Activated CD8-positive, alpha-beta T cell treated with anti-CD3 and anti-CD28 coated beads for 36 hours (primary cell): ENCODE measurements at regions of chr18 and their contacts with region 1.

Region 1: GRCh38 chr18:11553098-11553940 is 56.1 kb upstream of the SLC35G4 start:
- DNase-seq: peak; percentile 53
- ATAC-seq: peak; percentile 74
- H3K4me3 Mint-ChIP-seq: no peak overlapping the region
- H3K27ac Mint-ChIP-seq: no peak overlapping the region
- H3K4me1 Mint-ChIP-seq: no peaks in the 10 kb centered on the region
- H3K27me3 Mint-ChIP-seq: peaks cover 2% of the 10 kb centered on the region
- CTCF ChIP-seq: peak; percentile 92

Region 2: GRCh38 chr18:11215216-11215615 is 338.1 kb before region 1 on chr18:
- CTCF ChIA-PET with region 1: no interaction called
- POLR2A ChIA-PET with region 1: no interaction called
- intact Hi-C with region 1: loop called (anchors 10 kb)
- DNase-seq: no peak
- ATAC-seq: no peak
- H3K4me3 Mint-ChIP-seq: no peak overlapping the region
- H3K27ac Mint-ChIP-seq: no peak overlapping the region
- H3K4me1 Mint-ChIP-seq: no peaks in the 10 kb centered on the region
- H3K27me3 Mint-ChIP-seq: no peaks in the 10 kb centered on the region
- CTCF ChIP-seq: no peak

Region 3: GRCh38 chr18:11500153-11501122 is 52.9 kb before region 1 on chr18:
- CTCF ChIA-PET with region 1: interaction called, 5 read pairs
- POLR2A ChIA-PET with region 1: no interaction called
- intact Hi-C with region 1: loop called (anchors 5 kb)
- DNase-seq: no peak
- ATAC-seq: no peak
- H3K4me3 Mint-ChIP-seq: no peak overlapping the region
- H3K27ac Mint-ChIP-seq: no peak overlapping the region
- H3K4me1 Mint-ChIP-seq: no peaks in the 10 kb centered on the region
- H3K27me3 Mint-ChIP-seq: peaks cover 2% of the 10 kb centered on the region
- CTCF ChIP-seq: no peak

Region 4: DNA sequence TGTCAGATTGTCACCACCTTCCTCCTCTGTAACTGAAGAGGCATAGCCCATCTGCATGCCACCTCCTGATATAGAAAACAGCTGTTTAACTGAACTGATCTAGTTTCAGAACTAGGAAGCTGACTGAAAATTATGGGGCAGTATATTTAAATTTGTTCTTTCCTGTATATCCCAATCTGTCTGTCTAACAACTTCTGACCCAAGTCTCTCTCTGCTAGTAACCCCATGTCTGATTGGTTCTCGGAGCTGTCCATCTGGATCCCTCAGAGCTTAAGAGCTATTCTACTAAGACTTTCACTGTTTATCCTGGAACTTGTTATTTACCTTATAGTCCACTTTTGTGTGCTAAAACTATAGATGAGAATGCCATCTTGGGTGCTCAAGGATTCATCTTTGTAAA is 12.1 kb before region 1 on chr18:
- CTCF ChIA-PET with region 1: interaction called, 14 read pairs
- POLR2A ChIA-PET with region 1: no interaction called
- intact Hi-C with region 1: no loop called
- DNase-seq: no peak
- ATAC-seq: no peak
- H3K4me3 Mint-ChIP-seq: no peak overlapping the region
- H3K27ac Mint-ChIP-seq: no peak overlapping the region
- H3K4me1 Mint-ChIP-seq: no peaks in the 10 kb centered on the region
- H3K27me3 Mint-ChIP-seq: no peaks in the 10 kb centered on the region
- CTCF ChIP-seq: no peak